Head of caudate nucleus (tissue), 42 donors: ENCODE measurements at regions of chr2 and their contacts with region 1.

Region 1: GRCh38 chr2:231706731-231707624 is 1.3 kb upstream of the PTMA start:
- DNase-seq: peak; percentile 97 to 100 (median 99)

Region 2: DNA sequence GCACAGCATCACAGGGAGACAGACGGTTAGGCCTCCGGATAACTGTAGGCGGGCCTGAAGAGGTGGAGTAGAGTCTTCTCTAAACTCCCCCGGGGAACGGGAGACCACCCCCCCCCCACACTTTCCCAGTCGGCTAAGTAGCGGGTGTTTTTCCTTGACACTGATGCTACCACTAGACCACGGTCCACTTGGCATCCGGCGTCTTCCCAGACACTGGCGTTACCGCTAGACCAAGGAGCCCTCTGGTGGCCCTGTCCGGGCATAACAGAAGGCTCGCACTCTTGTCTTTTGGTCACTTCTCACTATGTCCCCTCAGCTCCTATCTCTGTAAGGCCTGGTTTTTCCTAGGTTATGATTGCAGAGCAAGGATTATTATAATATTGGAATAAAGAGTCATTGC is 217.0 kb before region 1 on chr2:
- intact Hi-C with region 1: no loop called
- DNase-seq: peak in 14 of 42 donors; percentile 13 to 53 (median 37)

Region 3: GRCh38 chr2:231662028-231662810 is 44.8 kb before region 1 on chr2:
- intact Hi-C with region 1: loop called (anchors 1 kb)
- DNase-seq: peak; percentile 83 to 99 (median 96)

Region 4: GRCh38 chr2:231680992-231681853 is 25.8 kb before region 1 on chr2:
- intact Hi-C with region 1: loop called (anchors 2 kb)
- DNase-seq: peak; percentile 62 to 96 (median 89)

Region 5: DNA sequence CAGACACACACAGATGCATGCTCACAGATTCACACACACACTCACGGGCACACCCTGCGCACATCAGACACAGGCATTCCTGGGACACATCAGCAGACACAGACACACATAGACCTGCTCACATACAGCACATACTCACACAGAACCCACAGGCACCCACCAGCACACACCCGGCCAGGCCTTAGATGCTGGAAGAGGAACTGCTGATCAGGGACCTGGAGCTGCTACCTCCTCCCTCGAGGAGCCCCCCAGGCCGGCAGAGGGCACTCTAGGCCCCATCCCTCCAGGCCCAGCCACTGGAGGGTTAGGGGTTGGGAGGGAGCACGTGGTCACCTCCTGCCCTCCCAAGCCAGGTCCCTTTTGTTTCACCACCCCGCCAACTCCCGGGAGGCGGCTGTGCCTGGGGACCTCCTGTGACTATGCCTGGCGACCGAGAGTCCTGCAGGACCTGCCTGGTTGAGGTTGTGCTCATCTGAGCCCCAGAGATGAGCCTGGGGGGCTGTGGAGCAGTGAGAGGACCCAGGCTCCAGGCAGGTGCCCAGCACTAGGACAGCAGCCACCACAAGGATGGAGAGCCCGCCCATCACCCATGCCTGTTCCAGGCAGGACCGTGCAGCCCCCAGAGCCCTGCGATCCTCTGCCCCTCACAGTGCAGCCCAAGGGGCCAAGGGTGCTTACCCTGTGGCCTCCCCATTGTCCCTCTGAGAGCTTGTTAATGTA is 19.7 kb before region 1 on chr2:
- intact Hi-C with region 1: loop called (anchors 2 kb)
- DNase-seq: peak; percentile 71 to 95 (median 89)

Region 6: GRCh38 chr2:231752061-231752460 is 45.1 kb after region 1 on chr2:
- intact Hi-C with region 1: no loop called
- DNase-seq: no peak